Heart right ventricle (tissue), 16 donors: ENCODE measurements at regions of chr17 and their contacts with region 1.

Region 1: GRCh38 chr17:69898601-69899000 is 176.4 kb upstream of the KCNJ16 start:
- DNase-seq: no peak
- ATAC-seq: no peak
- H3K4me3 ChIP-seq: no peak overlapping the region
- H3K27ac ChIP-seq: no peak overlapping the region
- H3K4me1 ChIP-seq: peaks cover 0 to 14% (median 3%) of the 10 kb centered on the region in 9 donors
- H3K27me3 ChIP-seq: no peaks in the 10 kb centered on the region
- CTCF ChIP-seq: no peak

Region 2: DNA sequence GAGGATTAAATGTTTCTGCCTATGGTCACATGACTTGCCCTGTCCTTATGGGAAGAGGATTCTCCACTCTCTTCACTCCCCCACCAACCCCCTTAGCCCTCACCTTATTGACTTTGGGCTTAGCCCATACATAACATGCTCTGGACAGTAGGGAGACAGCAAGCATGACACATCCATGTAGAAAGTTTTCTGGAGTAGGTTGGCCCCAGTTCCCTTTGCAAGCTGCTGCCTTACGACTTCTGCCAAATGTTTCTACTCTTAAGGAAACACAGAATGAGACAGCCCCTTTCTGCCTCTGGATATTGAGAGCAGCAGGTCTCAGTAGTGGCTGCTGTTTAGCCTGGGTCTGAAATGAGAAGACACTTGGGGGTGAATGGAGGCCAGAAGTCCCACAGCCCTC is 202.0 kb before region 1 on chr17:
- intact Hi-C with region 1: no loop called
- DNase-seq: no peak
- ATAC-seq: peak in 5 of 8 donors; percentile 19 to 67 (median 47)
- H3K4me3 ChIP-seq: no peak overlapping the region
- H3K27ac ChIP-seq: no peak overlapping the region
- H3K4me1 ChIP-seq: peaks cover 0 to 12% (median 2%) of the 10 kb centered on the region in 9 donors
- H3K27me3 ChIP-seq: no peaks in the 10 kb centered on the region
- CTCF ChIP-seq: no peak

Region 3: GRCh38 chr17:69949973-69950695 is 51.5 kb after region 1 on chr17:
- intact Hi-C with region 1: loop called in 1 of 10 experiments (anchors 10 kb)
- DNase-seq: no peak
- ATAC-seq: no peak
- H3K4me3 ChIP-seq: no peak overlapping the region
- H3K27ac ChIP-seq: no peak overlapping the region
- H3K4me1 ChIP-seq: peaks cover 0 to 34% (median 13%) of the 10 kb centered on the region in 9 donors
- H3K27me3 ChIP-seq: no peaks in the 10 kb centered on the region
- CTCF ChIP-seq: no peak

Region 4: DNA sequence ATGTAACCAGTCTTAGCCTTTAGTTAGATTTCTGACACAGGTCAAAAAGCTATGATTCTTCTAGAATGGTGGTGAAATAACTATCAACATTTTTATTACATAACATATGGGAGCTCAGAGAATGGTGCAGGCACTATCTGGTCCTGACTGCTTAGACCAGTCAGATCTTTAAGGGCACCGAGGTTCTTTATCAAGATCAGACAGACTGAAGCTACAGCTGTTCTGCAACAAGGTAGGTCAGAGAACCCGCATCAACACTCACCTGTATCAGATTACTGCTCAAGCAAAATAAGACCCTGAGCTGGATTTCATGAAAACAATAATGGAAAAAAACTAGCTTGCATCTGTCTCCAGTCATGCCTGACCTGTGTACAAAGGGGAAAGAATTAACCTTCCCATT is 431.1 kb after region 1 on chr17:
- intact Hi-C with region 1: no loop called
- DNase-seq: no peak
- ATAC-seq: no peak
- H3K4me3 ChIP-seq: no peak overlapping the region
- H3K27ac ChIP-seq: no peak overlapping the region
- H3K4me1 ChIP-seq: peaks cover 0 to 8% (median 0%) of the 10 kb centered on the region in 9 donors
- H3K27me3 ChIP-seq: no peaks in the 10 kb centered on the region
- CTCF ChIP-seq: no peak